Colonic mucosa (tissue), 4 donors: ENCODE measurements at regions of chr6 and their contacts with region 1.

Region 1: GRCh38 chr6:31396422-31397152 is 6.8 kb upstream of the MICA start:
- DNase-seq: peak; percentile 96
- H3K4me3 ChIP-seq: no peak overlapping the region
- H3K27ac ChIP-seq: peak overlapping the region; percentile 9
- H3K4me1 ChIP-seq: peaks cover 4% of the 10 kb centered on the region
- H3K27me3 ChIP-seq: no peaks in the 10 kb centered on the region
- CTCF ChIP-seq: peak; percentile 94

Region 2: GRCh38 chr6:31308050-31308844 is 88.3 kb before region 1 on chr6:
- intact Hi-C with region 1: no loop called
- DNase-seq: peak; percentile 87
- H3K4me3 ChIP-seq: peak overlapping the region; percentile 49
- H3K27ac ChIP-seq: no peak overlapping the region
- H3K4me1 ChIP-seq: no peaks in the 10 kb centered on the region
- H3K27me3 ChIP-seq: no peaks in the 10 kb centered on the region
- CTCF ChIP-seq: no peak

Region 3: GRCh38 chr6:31441365-31442267 is 45.0 kb after region 1 on chr6:
- intact Hi-C with region 1: loop called (anchors 2 kb)
- DNase-seq: peak; percentile 90
- H3K4me3 ChIP-seq: no peak overlapping the region
- H3K27ac ChIP-seq: no peak overlapping the region
- H3K4me1 ChIP-seq: no peaks in the 10 kb centered on the region
- H3K27me3 ChIP-seq: no peaks in the 10 kb centered on the region
- CTCF ChIP-seq: peak; percentile 78